Transverse colon (tissue), 4 donors: ENCODE measurements at regions of chr17 and their contacts with region 1.

Region 1: DNA sequence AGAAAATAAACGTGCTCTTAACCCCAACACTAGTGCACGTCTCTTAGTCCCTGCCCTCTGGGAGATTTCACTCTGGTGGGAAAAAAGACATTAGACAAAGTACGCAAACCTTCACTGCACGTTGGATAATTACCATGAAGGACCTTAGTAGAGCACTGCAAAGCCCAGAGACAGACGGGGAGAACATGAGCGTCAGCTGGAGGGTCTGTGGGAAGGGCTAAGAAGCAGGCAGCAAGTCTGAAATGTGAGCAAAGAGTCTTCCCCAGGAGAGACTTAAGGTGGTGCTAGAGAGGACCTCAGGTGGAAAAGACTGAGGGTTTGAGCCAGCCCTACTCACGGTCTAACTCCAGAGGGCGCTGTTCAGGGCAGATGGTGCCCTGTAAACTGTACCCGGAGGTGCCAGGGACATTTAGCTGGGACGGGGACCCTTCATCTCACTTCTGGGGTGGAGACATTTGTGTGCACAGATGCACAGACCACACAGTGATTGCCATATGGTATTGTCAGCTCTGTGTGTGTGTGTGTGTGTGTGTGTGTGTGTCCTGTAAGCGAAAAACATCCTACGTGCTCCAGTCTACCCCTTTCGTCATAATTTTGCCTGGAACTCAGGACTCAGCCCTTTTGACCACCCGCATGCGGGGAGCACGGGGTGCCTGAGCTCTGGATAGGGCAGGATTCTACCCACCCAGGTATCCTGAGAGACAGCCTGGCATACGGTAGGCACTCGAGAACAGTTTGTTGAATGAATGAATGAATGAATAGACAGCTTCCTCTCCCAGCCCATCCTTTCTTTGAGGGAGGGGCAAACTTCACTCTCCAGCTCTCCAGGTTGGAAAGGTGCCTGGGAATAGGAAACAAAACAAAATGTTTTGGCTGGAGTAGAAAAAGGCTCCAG is 10.1 kb upstream of the STAC2 start:
- DNase-seq: peak; percentile 29
- H3K4me3 ChIP-seq: no peak overlapping the region
- H3K27ac ChIP-seq: no peak overlapping the region
- H3K4me1 ChIP-seq: peaks cover 0 to 18% (median 0%) of the 10 kb centered on the region in 4 donors
- H3K27me3 ChIP-seq: peaks cover 35% of the 10 kb centered on the region
- CTCF ChIP-seq: peak; percentile 34 to 64 (median 47)
- EP300 ChIP-seq: no peak
- POLR2A ChIP-seq: no peak

Region 2: GRCh38 chr17:38958756-38959155 is 277.0 kb before region 1 on chr17:
- in situ Hi-C with region 1: no loop called
- intact Hi-C with region 1: no loop called
- DNase-seq: no peak
- H3K4me3 ChIP-seq: no peak overlapping the region
- H3K27ac ChIP-seq: no peak overlapping the region
- H3K4me1 ChIP-seq: no peaks in the 10 kb centered on the region
- H3K27me3 ChIP-seq: no peaks in the 10 kb centered on the region
- CTCF ChIP-seq: no peak
- EP300 ChIP-seq: no peak
- POLR2A ChIP-seq: no peak

Region 3: DNA sequence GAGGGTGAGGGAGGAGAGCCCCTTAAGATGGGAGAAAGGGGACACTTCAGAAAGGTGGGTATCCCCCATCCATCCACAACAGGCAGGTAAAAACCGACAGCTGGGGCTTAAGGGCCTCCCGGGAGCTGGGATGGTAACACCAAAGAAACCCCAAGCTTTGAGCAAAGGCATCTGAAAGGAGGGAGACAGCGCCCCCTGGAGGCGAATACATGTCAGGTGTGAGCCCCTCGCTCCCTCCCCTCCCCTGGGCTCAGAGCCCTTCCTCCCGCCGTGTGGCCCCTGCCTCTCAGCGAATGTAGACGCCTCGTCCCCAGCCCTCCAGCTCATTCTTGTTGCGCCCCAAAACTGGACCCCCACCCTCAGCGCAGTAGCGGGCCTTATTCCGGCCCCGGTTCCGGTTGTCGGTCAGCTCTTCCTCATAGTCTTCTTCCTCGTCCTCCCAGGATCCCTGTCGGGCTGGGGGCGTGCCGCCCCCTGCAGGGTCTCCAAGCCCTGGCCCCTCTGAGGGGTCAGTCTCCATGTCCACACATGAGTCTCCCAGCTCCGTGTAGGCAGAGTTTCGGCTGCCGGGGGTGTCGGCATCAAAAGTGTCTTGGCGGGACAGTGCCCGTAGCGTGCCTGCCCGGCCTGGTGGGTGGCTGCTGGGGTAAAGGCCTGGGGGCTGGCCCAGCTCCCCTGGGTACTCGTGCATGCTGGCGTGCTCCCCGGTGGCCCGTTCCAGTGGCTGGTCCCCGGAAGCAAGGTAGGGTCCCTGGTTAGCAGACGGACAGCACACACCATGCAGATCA is 60.7 kb before region 1 on chr17:
- in situ Hi-C with region 1: loop called in 1 of 4 experiments (anchors 10 kb)
- intact Hi-C with region 1: no loop called
- DNase-seq: peak; percentile 78
- H3K4me3 ChIP-seq: no peak overlapping the region
- H3K27ac ChIP-seq: no peak overlapping the region
- H3K4me1 ChIP-seq: peaks cover 0 to 19% (median 9%) of the 10 kb centered on the region in 4 donors
- H3K27me3 ChIP-seq: no peaks in the 10 kb centered on the region
- CTCF ChIP-seq: peak; percentile 80 to 92 (median 85)
- EP300 ChIP-seq: no peak
- POLR2A ChIP-seq: no peak